AG04450 (cell line): ENCODE measurements at regions of chr3 and their contacts with region 1.

Region 1: GRCh38 chr3:168165390-168166269 is 69.9 kb upstream of the GOLIM4 start:
- DNase-seq: peak; percentile 60
- H3K4me3 ChIP-seq: no peak overlapping the region
- H3K27ac ChIP-seq: no peak overlapping the region
- H3K27me3 ChIP-seq: no peaks in the 10 kb centered on the region
- CTCF ChIP-seq: peak; percentile 72

Region 2: DNA sequence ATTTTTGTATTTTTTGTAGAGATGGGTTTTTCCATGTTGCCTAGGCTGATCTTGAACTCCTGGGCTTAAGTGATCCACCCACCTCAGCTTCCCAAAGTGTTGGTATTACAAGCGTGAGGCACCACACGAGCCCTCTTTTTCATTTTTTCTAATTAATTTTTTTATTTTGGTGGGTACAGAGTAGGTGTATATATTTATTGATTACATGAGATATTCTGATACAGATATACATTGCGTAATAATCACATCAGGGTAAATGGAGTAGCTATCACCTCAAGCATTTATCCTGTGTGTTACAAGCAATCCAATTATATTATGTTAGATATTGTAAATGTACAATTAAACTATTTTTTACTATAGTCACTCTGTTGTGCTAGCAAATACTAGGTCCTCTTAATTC is 578.0 kb before region 1 on chr3:
- CTCF ChIA-PET with region 1: no interaction called
- POLR2A ChIA-PET with region 1: no interaction called
- DNase-seq: no peak
- H3K4me3 ChIP-seq: no peak overlapping the region
- H3K27ac ChIP-seq: no peak overlapping the region
- H3K27me3 ChIP-seq: no peaks in the 10 kb centered on the region
- CTCF ChIP-seq: no peak

Region 3: DNA sequence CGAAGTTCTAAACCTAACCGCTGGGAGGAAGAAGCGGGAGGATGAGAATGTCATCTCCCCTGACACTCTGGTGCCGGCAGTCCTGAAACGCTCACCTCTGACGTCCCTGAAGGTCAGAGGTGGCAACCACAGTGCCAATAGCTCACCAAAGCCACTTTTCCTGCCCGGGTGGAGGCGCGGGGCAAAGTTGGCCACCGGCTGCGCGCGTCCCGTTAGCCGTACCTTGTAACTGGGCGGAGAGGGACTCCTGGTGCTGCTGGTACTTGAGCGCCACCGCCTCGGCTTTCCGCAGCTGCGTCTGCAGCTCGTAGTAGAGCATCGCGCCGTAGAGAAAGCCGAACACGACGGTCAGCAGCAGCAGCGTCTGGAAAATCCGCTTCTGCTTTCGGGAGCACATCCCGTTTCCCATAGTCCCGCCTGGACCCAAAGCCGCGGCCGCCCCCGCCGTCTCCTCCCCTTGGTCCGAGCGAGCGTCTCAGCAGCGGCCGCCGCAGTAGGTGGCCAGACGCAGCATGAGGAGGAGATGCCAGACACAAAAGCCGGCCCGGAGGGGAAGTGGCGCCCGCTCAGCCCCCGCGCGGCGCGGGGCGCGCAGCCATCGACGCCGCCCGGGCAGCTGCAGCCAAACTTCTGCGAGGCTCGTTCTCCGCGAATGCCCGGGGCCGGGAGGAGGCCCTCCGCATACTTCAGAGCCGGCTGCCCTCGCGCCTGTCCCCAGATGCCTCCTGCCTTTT is 70.6 kb before region 1 on chr3:
- CTCF ChIA-PET with region 1: interaction called, 17 read pairs
- POLR2A ChIA-PET with region 1: no interaction called
- DNase-seq: no peak
- H3K4me3 ChIP-seq: peak overlapping the region; percentile 88
- H3K27ac ChIP-seq: peak overlapping the region; percentile 90
- H3K27me3 ChIP-seq: no peaks in the 10 kb centered on the region
- CTCF ChIP-seq: peak; percentile 37; the same call in 1 of the 2 replicates

Region 4: DNA sequence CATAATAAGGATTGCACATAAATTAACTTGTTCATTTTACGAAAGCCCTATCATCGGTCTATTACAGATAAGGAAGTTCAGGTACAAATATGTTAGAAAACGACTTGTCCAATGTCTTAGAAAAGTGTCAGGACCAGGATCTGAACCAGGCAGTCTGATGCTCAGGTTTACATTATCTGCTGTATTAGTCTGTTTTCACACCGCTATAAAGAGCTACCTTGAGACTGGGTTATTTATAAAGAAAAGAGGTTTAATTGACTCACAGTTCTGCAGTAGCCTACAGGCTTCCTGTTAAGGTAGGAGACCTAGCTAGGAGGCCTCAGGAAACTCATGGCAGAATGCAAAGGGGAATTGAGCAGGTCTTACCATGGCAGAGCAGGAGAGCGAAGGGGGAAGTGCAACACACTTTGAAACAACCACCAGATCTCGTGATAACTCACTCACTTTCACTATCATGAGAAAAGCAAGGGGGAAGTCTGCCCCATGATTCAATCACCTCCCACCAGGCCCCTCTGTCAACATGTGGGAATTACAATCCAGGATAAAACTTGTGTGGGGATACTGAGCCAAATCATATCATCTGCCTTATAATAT is 24.1 kb before region 1 on chr3:
- CTCF ChIA-PET with region 1: interaction called, 23 read pairs
- POLR2A ChIA-PET with region 1: no interaction called
- DNase-seq: no peak
- H3K4me3 ChIP-seq: no peak overlapping the region
- H3K27ac ChIP-seq: no peak overlapping the region
- H3K27me3 ChIP-seq: no peaks in the 10 kb centered on the region
- CTCF ChIP-seq: no peak

Region 5: GRCh38 chr3:168186293-168186983 is 20.8 kb after region 1 on chr3:
- CTCF ChIA-PET with region 1: interaction called, 34 read pairs
- POLR2A ChIA-PET with region 1: no interaction called
- DNase-seq: no peak
- H3K4me3 ChIP-seq: no peak overlapping the region
- H3K27ac ChIP-seq: no peak overlapping the region
- H3K27me3 ChIP-seq: no peaks in the 10 kb centered on the region
- CTCF ChIP-seq: no peak

Region 6: GRCh38 chr3:168391221-168391620 is 225.6 kb after region 1 on chr3:
- CTCF ChIA-PET with region 1: no interaction called
- POLR2A ChIA-PET with region 1: no interaction called
- DNase-seq: no peak
- H3K4me3 ChIP-seq: no peak overlapping the region
- H3K27ac ChIP-seq: no peak overlapping the region
- H3K27me3 ChIP-seq: no peaks in the 10 kb centered on the region
- CTCF ChIP-seq: no peak